T-cell (primary cell): ENCODE measurements at regions of chr12 and their contacts with region 1.

Region 1: GRCh38 chr12:50246873-50247612 is 36.3 kb downstream of the LIMA1 start:
- DNase-seq: no peak
- ATAC-seq: no peak
- H3K4me3 ChIP-seq: no peak overlapping the region
- H3K4me3 Mint-ChIP-seq: no peak overlapping the region
- H3K27ac ChIP-seq: no peak overlapping the region
- H3K27ac Mint-ChIP-seq: no peak overlapping the region
- H3K4me1 ChIP-seq: no peaks in the 10 kb centered on the region
- H3K4me1 Mint-ChIP-seq: peaks cover 4 to 5% (median 4%) of the 10 kb centered on the region in 3 donors
- H3K27me3 ChIP-seq: no peaks in the 10 kb centered on the region
- H3K27me3 Mint-ChIP-seq: no peaks in the 10 kb centered on the region

Region 2: GRCh38 chr12:50257686-50258551 is 10.9 kb after region 1 on chr12:
- CTCF ChIA-PET with region 1: interaction called, 3 to 7 read pairs
- POLR2A ChIA-PET with region 1: interaction called in 1 of 2 experiments, 12 read pairs
- DNase-seq: no peak
- ATAC-seq: no peak
- H3K4me3 ChIP-seq: no peak overlapping the region
- H3K4me3 Mint-ChIP-seq: no peak overlapping the region
- H3K27ac ChIP-seq: no peak overlapping the region
- H3K27ac Mint-ChIP-seq: no peak overlapping the region
- H3K4me1 ChIP-seq: no peaks in the 10 kb centered on the region
- H3K4me1 Mint-ChIP-seq: peaks cover 0 to 6% (median 3%) of the 10 kb centered on the region in 3 donors
- H3K27me3 ChIP-seq: no peaks in the 10 kb centered on the region
- H3K27me3 Mint-ChIP-seq: no peaks in the 10 kb centered on the region

Region 3: GRCh38 chr12:50268482-50268881 is 21.4 kb after region 1 on chr12:
- CTCF ChIA-PET with region 1: no interaction called
- POLR2A ChIA-PET with region 1: interaction called in 1 of 2 experiments, 19 read pairs
- DNase-seq: no peak
- ATAC-seq: no peak
- H3K4me3 ChIP-seq: no peak overlapping the region
- H3K4me3 Mint-ChIP-seq: no peak overlapping the region
- H3K27ac ChIP-seq: no peak overlapping the region
- H3K27ac Mint-ChIP-seq: no peak overlapping the region
- H3K4me1 ChIP-seq: no peaks in the 10 kb centered on the region
- H3K4me1 Mint-ChIP-seq: no peaks in the 10 kb centered on the region
- H3K27me3 ChIP-seq: no peaks in the 10 kb centered on the region
- H3K27me3 Mint-ChIP-seq: no peaks in the 10 kb centered on the region

Region 4: DNA sequence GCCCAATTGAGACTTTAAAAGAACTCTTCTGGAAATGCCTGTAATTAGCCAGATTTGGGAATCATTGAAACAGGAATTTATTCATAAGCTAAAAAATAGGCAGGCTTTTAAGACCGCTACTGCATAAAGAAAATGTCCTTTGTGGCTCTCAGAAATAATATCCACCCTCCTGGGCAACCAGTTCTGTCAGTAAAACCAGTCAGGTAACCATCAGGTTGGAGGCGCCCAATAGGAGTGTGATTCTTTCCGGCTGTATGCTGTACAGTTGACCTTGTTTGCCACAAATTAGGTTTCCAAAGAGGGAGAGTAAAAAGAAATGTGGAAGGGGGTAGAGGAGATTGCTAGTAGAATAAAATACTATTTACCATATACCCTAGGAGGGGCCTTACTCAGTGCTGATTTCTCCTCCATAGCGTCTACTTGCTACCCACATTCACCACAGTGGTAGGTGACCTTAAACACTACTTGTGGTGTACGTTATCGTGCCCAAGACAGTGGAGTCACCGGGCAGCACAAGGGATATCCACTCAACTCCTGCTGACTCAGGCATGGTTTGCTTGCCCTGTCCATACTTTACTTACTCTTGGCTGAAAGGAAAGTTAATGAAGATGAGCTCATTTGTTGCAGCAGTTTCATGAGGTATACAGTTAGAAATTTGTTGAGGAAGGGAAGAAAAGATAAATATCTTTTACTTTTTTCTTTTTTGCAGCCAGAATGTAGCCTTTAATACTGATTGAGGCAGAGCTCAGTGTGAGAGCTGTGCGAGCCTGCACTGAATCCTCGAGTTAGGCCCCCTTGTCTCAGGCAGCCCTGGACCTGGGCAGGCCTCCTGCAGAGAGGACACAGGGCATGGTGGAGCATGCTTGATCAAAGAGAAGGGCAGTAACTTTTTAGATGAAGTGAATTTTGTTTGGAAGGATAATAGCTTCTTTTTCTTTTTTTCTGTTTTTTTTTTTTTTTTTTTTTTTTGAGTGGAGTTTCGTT is 334.4 kb after region 1 on chr12:
- CTCF ChIA-PET with region 1: no interaction called
- POLR2A ChIA-PET with region 1: no interaction called
- DNase-seq: no peak
- ATAC-seq: no peak
- H3K4me3 ChIP-seq: no peak overlapping the region
- H3K4me3 Mint-ChIP-seq: no peak overlapping the region
- H3K27ac ChIP-seq: no peak overlapping the region
- H3K27ac Mint-ChIP-seq: no peak overlapping the region
- H3K4me1 ChIP-seq: no peaks in the 10 kb centered on the region
- H3K4me1 Mint-ChIP-seq: peaks cover 0 to 29% (median 25%) of the 10 kb centered on the region in 3 donors
- H3K27me3 ChIP-seq: no peaks in the 10 kb centered on the region
- H3K27me3 Mint-ChIP-seq: no peaks in the 10 kb centered on the region